Activated naive CD4-positive, alpha-beta T cell treated with anti-CD3 and anti-CD28 coated beads for 36 hours (primary cell): ENCODE measurements at regions of chr6 and their contacts with region 1.

Region 1: DNA sequence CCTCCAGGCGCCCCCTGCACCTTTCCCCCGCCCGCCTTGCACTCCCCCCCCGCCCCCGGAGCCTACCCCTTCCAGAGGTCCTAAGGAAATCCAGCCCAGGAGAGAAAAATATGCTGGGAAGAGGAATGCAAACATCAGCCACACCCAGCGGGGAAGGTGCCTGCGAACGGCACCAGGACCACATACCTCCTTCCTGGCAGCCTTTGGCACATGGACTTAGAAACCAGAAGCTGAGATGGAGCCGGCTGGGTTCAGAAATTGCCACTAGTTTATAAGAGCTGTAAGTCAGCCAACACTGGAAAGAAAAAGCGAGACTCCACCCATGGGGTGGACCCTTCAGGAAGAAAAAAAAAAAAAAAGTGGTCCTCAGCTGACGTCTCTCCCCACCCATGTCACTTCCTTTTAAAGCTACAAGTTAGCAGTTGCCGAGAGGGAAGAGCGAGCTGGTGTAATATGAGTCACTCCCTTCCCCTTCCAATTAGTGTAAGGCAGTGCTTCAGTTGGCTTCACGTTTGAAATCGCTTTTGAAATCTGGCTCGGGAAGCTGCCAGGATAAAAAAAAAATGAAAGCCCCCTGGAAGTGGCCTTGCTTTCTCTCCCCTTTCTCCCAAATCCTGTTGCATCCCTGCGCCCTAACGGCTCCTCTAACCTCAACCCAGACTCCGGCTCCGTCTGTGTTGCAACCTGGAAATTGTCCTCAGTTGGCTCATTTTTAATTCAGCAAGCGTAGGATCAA is at the start of gene AGPAT4:
- DNase-seq: peak; percentile 71
- H3K4me3 Mint-ChIP-seq: peak within 1 kb of the TSS; percentile 73
- H3K27ac Mint-ChIP-seq: peak within 1 kb of the TSS; percentile 77
- H3K4me1 Mint-ChIP-seq: peaks cover 16% of the 10 kb centered on the region
- H3K27me3 Mint-ChIP-seq: peaks cover 3% of the 10 kb centered on the region
- total RNA-seq, gene AGPAT4: 3.7 to 4.2 TPM

Region 2: GRCh38 chr6:160992061-160992979 is 281.6 kb before region 1 on chr6:
- CTCF ChIA-PET with region 1: no interaction called
- intact Hi-C with region 1: loop called (anchors 1 kb)
- DNase-seq: peak; percentile 51
- H3K4me3 Mint-ChIP-seq: peak overlapping the region; percentile 87
- H3K27ac Mint-ChIP-seq: peak overlapping the region; percentile 77
- H3K4me1 Mint-ChIP-seq: peaks cover 31% of the 10 kb centered on the region
- H3K27me3 Mint-ChIP-seq: peaks cover 2% of the 10 kb centered on the region

Region 3: GRCh38 chr6:161111261-161111660 is 162.7 kb before region 1 on chr6:
- CTCF ChIA-PET with region 1: no interaction called
- intact Hi-C with region 1: loop called (anchors 1 kb)
- DNase-seq: peak; percentile 23
- H3K4me3 Mint-ChIP-seq: no peak overlapping the region
- H3K27ac Mint-ChIP-seq: peak overlapping the region; percentile 13
- H3K4me1 Mint-ChIP-seq: peaks cover 15% of the 10 kb centered on the region
- H3K27me3 Mint-ChIP-seq: no peaks in the 10 kb centered on the region

Region 4: GRCh38 chr6:161128680-161129196 is 145.2 kb before region 1 on chr6:
- CTCF ChIA-PET with region 1: no interaction called
- intact Hi-C with region 1: loop called (anchors 5 kb)
- DNase-seq: peak; percentile 57
- H3K4me3 Mint-ChIP-seq: no peak overlapping the region
- H3K27ac Mint-ChIP-seq: peak overlapping the region; percentile 66
- H3K4me1 Mint-ChIP-seq: peaks cover 20% of the 10 kb centered on the region
- H3K27me3 Mint-ChIP-seq: no peaks in the 10 kb centered on the region

Region 5: GRCh38 chr6:161235776-161236633 is 37.9 kb before region 1 on chr6:
- CTCF ChIA-PET with region 1: interaction called, 3 read pairs
- intact Hi-C with region 1: loop called (anchors 1 kb)
- DNase-seq: no peak
- H3K4me3 Mint-ChIP-seq: no peak overlapping the region
- H3K27ac Mint-ChIP-seq: peak overlapping the region; percentile 68
- H3K4me1 Mint-ChIP-seq: peaks cover 16% of the 10 kb centered on the region
- H3K27me3 Mint-ChIP-seq: no peaks in the 10 kb centered on the region

Region 6: GRCh38 chr6:161292145-161292544 is 18.2 kb after region 1 on chr6:
- CTCF ChIA-PET with region 1: no interaction called
- intact Hi-C with region 1: no loop called
- DNase-seq: no peak
- H3K4me3 Mint-ChIP-seq: no peak overlapping the region
- H3K27ac Mint-ChIP-seq: no peak overlapping the region
- H3K4me1 Mint-ChIP-seq: no peaks in the 10 kb centered on the region
- H3K27me3 Mint-ChIP-seq: no peaks in the 10 kb centered on the region

Region 7: DNA sequence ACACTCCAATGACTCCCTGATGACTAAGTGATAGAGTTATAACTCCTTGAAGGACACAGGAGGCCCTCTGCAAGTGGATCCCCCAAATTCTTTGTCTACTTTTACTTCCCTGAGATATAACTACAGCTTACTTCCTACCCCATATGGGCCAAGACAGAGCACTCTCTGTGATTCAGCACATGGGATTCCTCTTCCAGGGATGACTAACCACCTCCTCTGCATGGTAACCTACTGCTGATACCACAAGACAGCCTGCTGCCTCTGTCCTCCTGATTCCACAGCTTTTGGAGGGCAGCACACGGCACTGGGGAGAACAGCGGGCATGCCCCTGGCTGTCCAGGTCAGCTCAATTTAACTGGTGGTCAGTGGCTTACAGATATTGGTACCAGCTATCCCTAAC is 675.6 kb after region 1 on chr6:
- CTCF ChIA-PET with region 1: no interaction called
- intact Hi-C with region 1: no loop called
- DNase-seq: no peak
- H3K4me3 Mint-ChIP-seq: no peak overlapping the region
- H3K27ac Mint-ChIP-seq: no peak overlapping the region
- H3K4me1 Mint-ChIP-seq: no peaks in the 10 kb centered on the region
- H3K27me3 Mint-ChIP-seq: no peaks in the 10 kb centered on the region